WTC11 (cell line): ENCODE measurements at regions of chr7 and their contacts with region 1.

Region 1: GRCh38 chr7:2232766-2233520 is at the start of gene MAD1L1:
- DNase-seq: peak; percentile 91
- ATAC-seq: peak; percentile 82
- H3K4me3 Mint-ChIP-seq: peak within 1 kb of the TSS; percentile 96
- H3K27ac Mint-ChIP-seq: peak within 1 kb of the TSS; percentile 98
- H3K4me1 Mint-ChIP-seq: peaks cover 13% of the 10 kb centered on the region
- H3K27me3 Mint-ChIP-seq: no peaks in the 10 kb centered on the region
- CTCF ChIP-seq: no peak
- total RNA-seq, gene MAD1L1: 43.8 to 47.8 TPM (median 46.7 TPM) in 3 replicates

Region 2: GRCh38 chr7:2209146-2209960 is 23.6 kb before region 1 on chr7:
- CTCF ChIA-PET with region 1: interaction called, 10 read pairs
- POLR2A ChIA-PET with region 1: no interaction called
- DNase-seq: peak; percentile 86
- ATAC-seq: peak; percentile 92
- H3K4me3 Mint-ChIP-seq: no peak overlapping the region
- H3K27ac Mint-ChIP-seq: peak overlapping the region; percentile 81
- H3K4me1 Mint-ChIP-seq: no peaks in the 10 kb centered on the region
- H3K27me3 Mint-ChIP-seq: no peaks in the 10 kb centered on the region
- CTCF ChIP-seq: peak; percentile 50

Region 3: GRCh38 chr7:2248984-2249694 is 16.2 kb after region 1 on chr7:
- CTCF ChIA-PET with region 1: no interaction called
- POLR2A ChIA-PET with region 1: no interaction called
- DNase-seq: no peak
- ATAC-seq: no peak
- H3K4me3 Mint-ChIP-seq: no peak overlapping the region
- H3K27ac Mint-ChIP-seq: peak overlapping the region; percentile 68; the same call in 1 of the 2 replicates
- H3K4me1 Mint-ChIP-seq: peaks cover 6% of the 10 kb centered on the region; the same call in 1 of the 2 replicates
- H3K27me3 Mint-ChIP-seq: no peaks in the 10 kb centered on the region
- CTCF ChIP-seq: no peak